Psoas muscle (tissue), 8 donors: ENCODE measurements at regions of chr9 and their contacts with region 1.

Region 1: DNA sequence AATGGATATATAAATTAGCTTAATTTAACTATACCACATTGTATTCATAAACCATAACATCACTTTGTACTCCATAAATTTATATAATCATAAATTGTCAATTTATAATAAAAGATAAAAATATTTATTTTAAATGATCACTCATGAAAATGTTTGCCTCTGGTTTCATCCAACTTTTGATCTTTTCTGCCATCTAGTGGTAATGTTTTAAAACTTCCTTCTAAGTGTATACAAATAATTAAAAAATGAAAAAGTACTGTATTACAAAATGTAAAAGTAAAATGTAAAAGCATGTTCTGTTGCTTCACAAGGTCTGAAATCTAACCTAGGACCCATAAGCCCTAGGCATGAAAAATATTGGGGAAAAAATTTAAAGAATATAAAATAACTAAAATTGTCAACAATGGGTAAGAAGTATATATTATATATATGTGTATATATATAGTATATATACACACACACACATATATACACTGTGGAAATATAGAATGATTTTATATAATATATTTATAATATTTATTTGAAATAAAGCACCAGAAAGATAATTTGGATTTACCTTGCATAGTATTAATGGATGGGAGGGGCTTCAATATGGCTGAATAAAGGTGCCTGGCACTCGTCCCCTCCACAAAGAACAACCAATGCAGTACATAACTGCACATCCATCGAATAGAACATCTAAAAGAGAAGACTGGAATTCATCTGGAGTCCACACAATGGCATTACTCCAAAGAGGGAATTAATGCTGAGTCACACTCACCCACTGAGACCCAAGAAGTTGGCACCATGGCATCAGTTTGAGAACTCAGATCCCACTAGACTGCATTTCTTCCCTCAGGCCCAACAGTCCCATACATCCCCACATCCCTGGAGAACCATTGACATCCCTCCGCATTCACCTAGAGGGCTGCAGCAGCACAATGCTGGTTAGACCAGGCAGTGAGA is 32.5 kb downstream of the ANXA1 start:
- DNase-seq: no peak
- ATAC-seq: no peak
- H3K4me3 ChIP-seq: no peak overlapping the region
- H3K27ac ChIP-seq: no peak overlapping the region
- H3K4me1 ChIP-seq: no peaks in the 10 kb centered on the region
- H3K27me3 ChIP-seq: no peaks in the 10 kb centered on the region
- CTCF ChIP-seq: peak; percentile 78

Region 2: GRCh38 chr9:72843520-72844439 is 340.4 kb before region 1 on chr9:
- intact Hi-C with region 1: loop called in 1 of 2 experiments (anchors 10 kb)
- DNase-seq: no peak
- ATAC-seq: no peak
- H3K4me3 ChIP-seq: no peak overlapping the region
- H3K27ac ChIP-seq: no peak overlapping the region
- H3K4me1 ChIP-seq: no peaks in the 10 kb centered on the region
- H3K27me3 ChIP-seq: no peaks in the 10 kb centered on the region
- CTCF ChIP-seq: no peak

Region 3: DNA sequence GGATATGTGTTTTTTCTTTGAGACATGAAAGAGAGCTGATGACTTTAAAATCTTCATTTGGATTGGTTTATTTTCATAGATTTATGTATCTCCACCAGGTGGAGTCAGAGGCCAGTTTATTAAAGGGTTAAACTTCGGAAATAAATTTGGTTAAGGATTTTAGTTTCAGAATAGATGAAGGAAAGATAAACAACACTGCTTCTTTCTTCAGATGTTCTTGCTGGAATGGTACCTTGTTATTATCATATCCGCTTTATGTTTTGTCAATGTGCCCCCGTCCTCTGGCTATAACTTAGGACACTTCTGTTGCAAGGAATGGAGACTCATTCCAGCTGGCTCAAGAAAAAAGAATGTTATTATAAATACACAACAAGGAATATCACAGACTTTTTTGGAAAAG is 312.5 kb before region 1 on chr9:
- intact Hi-C with region 1: loop called (anchors 5 to 10 kb)
- DNase-seq: no peak
- ATAC-seq: peak in 2 of 4 donors; percentile 51 to 76
- H3K4me3 ChIP-seq: peak overlapping the region; percentile 40
- H3K27ac ChIP-seq: no peak overlapping the region
- H3K4me1 ChIP-seq: peaks cover 8% of the 10 kb centered on the region
- H3K27me3 ChIP-seq: no peaks in the 10 kb centered on the region
- CTCF ChIP-seq: peak; percentile 60

Region 4: GRCh38 chr9:72925126-72925789 is 258.9 kb before region 1 on chr9:
- intact Hi-C with region 1: no loop called
- DNase-seq: no peak
- ATAC-seq: no peak
- H3K4me3 ChIP-seq: no peak overlapping the region
- H3K27ac ChIP-seq: no peak overlapping the region
- H3K4me1 ChIP-seq: no peaks in the 10 kb centered on the region
- H3K27me3 ChIP-seq: no peaks in the 10 kb centered on the region
- CTCF ChIP-seq: no peak

Region 5: GRCh38 chr9:73104342-73104741 is 79.8 kb before region 1 on chr9:
- intact Hi-C with region 1: loop called (anchors 1 to 5 kb)
- DNase-seq: no peak
- ATAC-seq: no peak
- H3K4me3 ChIP-seq: no peak overlapping the region
- H3K27ac ChIP-seq: no peak overlapping the region
- H3K4me1 ChIP-seq: no peaks in the 10 kb centered on the region
- H3K27me3 ChIP-seq: no peaks in the 10 kb centered on the region
- CTCF ChIP-seq: no peak